ENCODE measurements at regions of chr3 and their contacts with region 1.

Region 1: GRCh38 chr3:130759699-130760338 is 13.2 kb upstream of the PIK3R4 start:
- DNase-seq: peak; percentile 39
- ATAC-seq: peak; percentile 66
- H3K4me3 Mint-ChIP-seq: no peak overlapping the region
- H3K27ac Mint-ChIP-seq: no peak overlapping the region
- H3K4me1 Mint-ChIP-seq: peaks cover 9% of the 10 kb centered on the region
- H3K27me3 Mint-ChIP-seq: no peaks in the 10 kb centered on the region
- CTCF ChIP-seq: peak; percentile 67

Region 2: GRCh38 chr3:130725746-130726145 is 34.1 kb before region 1 on chr3:
- CTCF ChIA-PET with region 1: no interaction called
- POLR2A ChIA-PET with region 1: no interaction called
- DNase-seq: no peak
- ATAC-seq: no peak
- H3K4me3 Mint-ChIP-seq: no peak overlapping the region
- H3K27ac Mint-ChIP-seq: no peak overlapping the region
- H3K4me1 Mint-ChIP-seq: peaks cover 6% of the 10 kb centered on the region; the same call in 1 of the 2 replicates
- H3K27me3 Mint-ChIP-seq: no peaks in the 10 kb centered on the region
- CTCF ChIP-seq: no peak

Region 3: GRCh38 chr3:130850044-130850797 is 90.4 kb after region 1 on chr3:
- CTCF ChIA-PET with region 1: interaction called, 10 read pairs
- POLR2A ChIA-PET with region 1: no interaction called
- DNase-seq: no peak
- ATAC-seq: no peak
- H3K4me3 Mint-ChIP-seq: no peak overlapping the region
- H3K27ac Mint-ChIP-seq: no peak overlapping the region; the same call in 1 of the 2 replicates
- H3K4me1 Mint-ChIP-seq: peaks cover 42% of the 10 kb centered on the region
- H3K27me3 Mint-ChIP-seq: peaks cover 3% of the 10 kb centered on the region; the same call in 1 of the 2 replicates
- CTCF ChIP-seq: no peak

Region 4: DNA sequence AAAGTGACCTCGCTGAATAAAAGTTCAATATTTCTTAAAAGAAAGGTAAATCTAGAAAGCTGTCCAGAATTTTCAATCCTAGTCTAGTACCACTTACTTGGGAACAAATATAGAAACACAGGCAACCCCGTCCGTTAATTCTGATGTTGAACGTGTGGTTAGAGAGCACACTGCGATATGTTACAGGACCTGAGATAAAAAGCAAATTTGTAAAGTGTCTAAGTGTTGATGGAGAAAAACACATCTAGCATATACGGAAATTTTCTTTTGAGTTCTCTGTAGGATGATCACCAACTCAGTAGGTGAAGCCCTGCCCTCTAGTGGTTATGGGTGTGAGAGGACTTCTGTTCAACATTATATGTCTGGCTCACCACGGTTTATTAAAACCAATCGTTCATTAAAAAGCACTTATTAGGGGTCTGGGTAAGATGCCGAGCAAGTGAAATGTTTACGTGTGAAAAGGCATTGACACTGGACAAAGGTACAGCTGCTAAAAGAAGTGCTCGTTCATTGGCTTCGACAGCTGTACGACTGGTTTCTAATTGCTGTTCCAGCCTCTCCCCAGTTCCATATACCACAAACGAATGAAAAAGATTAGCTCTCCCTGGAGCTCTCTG is 133.0 kb after region 1 on chr3:
- CTCF ChIA-PET with region 1: interaction called, 36 read pairs
- POLR2A ChIA-PET with region 1: interaction called, 6 read pairs
- DNase-seq: peak; percentile 46
- ATAC-seq: peak; percentile 14
- H3K4me3 Mint-ChIP-seq: peak overlapping the region; percentile 87
- H3K27ac Mint-ChIP-seq: peak overlapping the region; percentile 78
- H3K4me1 Mint-ChIP-seq: peaks cover 36% of the 10 kb centered on the region
- H3K27me3 Mint-ChIP-seq: no peaks in the 10 kb centered on the region
- CTCF ChIP-seq: peak; percentile 51

Measured in WTC11 (cell line).